Activated T-helper 1 cell treated with anti-CD3 and anti-CD28 coated beads, Interleukin-12 subunit alpha, Interleukin-12 subunit beta, Interleukin-2, Interleukin-4 antibody, amounts not matched to agents 30 ng/mL and 10 ng/mL and 1 ng/mL, durations not matched to agents 14 hours and 24 hours and 36 hours (primary cell): ENCODE measurements at regions of chr10 and their contacts with region 1.

Region 1: DNA sequence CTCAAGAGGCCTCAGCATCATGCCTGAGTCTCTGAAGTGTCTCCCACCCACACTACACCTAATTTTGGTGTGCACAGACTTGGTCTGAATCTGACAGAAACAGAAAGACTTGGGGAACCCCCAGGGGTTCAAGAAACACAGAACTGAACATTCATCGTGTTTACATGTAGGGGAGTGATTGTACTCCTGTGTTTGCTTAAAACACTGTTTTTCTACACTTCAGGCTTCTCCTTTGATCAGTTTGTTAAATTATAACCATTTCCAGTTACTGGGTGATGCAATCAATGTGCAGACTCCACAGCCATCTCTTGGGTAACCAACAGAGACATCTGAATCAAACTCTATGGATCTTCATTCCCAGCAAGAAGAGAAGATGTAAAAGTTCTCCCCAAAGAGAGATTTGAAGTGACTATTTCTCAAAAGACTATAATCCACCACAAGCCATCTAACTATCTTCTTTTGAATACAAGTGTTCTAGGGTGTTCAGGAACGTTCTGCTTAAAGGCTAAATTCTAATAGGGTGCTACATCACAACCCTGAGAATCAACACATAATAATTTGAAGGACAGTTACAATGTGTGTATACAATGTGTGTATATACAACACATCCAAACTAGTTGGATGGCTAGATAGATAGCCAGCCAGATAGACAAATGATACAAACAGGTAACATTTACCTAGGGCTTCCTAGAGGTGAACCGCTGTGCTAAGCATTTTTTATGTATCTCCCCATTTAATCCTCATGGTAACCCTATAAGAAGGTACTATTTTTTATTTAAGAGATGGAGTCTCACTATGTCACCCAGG is 34.2 kb downstream of the DNAJC12 start:
- DNase-seq: no peak
- H3K4me3 Mint-ChIP-seq: no peak overlapping the region
- H3K27ac Mint-ChIP-seq: peak overlapping the region; percentile 78
- H3K4me1 Mint-ChIP-seq: peaks cover 25% of the 10 kb centered on the region
- H3K27me3 Mint-ChIP-seq: no peaks in the 10 kb centered on the region

Region 2: GRCh38 chr10:67815571-67816059 is 11.8 kb after region 1 on chr10:
- intact Hi-C with region 1: loop called (anchors 1 kb)
- DNase-seq: no peak
- H3K4me3 Mint-ChIP-seq: peak overlapping the region; percentile 53
- H3K27ac Mint-ChIP-seq: peak overlapping the region; percentile 81
- H3K4me1 Mint-ChIP-seq: peaks cover 28% of the 10 kb centered on the region
- H3K27me3 Mint-ChIP-seq: no peaks in the 10 kb centered on the region